Activated CD8-positive, alpha-beta memory T cell treated with anti-CD3 and anti-CD28 coated beads, Interleukin-2, amount 10 ng/mL, durations not matched to agents 7 days and 5 days (primary cell): ENCODE measurements at regions of chr18 and their contacts with region 1.

Region 1: DNA sequence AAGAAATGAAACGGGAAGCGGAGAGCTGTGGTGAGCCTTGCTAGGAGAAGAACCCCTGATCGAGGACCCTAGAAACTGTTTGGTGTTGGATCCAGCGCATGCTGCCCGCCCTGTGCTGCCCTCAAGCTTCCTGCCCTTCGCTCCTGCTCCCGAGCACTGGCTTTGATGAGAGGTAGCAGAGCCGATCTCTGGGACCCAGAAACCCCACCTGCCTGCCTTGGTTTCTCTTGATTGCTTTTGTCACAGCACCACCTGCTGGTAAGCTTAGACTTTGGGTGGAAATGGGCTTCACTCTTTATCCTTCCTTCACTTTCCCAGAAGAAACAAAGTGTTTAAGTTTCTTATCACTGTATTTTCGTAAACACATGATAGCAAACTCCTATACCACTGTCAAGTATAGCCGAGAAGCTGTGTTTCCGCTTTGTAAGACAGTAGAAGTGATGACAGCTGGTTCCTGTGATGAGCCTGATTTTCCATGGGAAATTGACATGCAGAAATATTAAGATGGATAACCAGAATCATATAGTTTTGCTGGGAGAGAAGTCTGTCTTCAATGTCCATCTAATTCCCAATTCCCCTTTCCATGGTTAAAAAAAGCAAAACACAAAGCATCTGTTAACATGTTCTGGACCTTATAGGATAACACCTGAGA is 267.4 kb downstream of the PHLPP1 start:
- DNase-seq: peak; percentile 69
- ATAC-seq: peak; percentile 75
- H3K4me3 Mint-ChIP-seq: peak overlapping the region; percentile 33
- H3K27ac Mint-ChIP-seq: no peak overlapping the region
- H3K4me1 Mint-ChIP-seq: peaks cover 6% of the 10 kb centered on the region
- H3K27me3 Mint-ChIP-seq: no peaks in the 10 kb centered on the region

Region 2: GRCh38 chr18:62584241-62585120 is 398.2 kb before region 1 on chr18:
- CTCF ChIA-PET with region 1: interaction called, 18 read pairs
- DNase-seq: peak; percentile 92
- ATAC-seq: peak; percentile 83
- H3K4me3 Mint-ChIP-seq: peak overlapping the region; percentile 9
- H3K27ac Mint-ChIP-seq: peak overlapping the region; percentile 96
- H3K4me1 Mint-ChIP-seq: peaks cover 56% of the 10 kb centered on the region
- H3K27me3 Mint-ChIP-seq: no peaks in the 10 kb centered on the region

Region 3: GRCh38 chr18:62637807-62638687 is 344.7 kb before region 1 on chr18:
- CTCF ChIA-PET with region 1: interaction called, 27 read pairs
- DNase-seq: peak; percentile 82
- ATAC-seq: peak; percentile 87
- H3K4me3 Mint-ChIP-seq: peak overlapping the region; percentile 56
- H3K27ac Mint-ChIP-seq: peak overlapping the region; percentile 81
- H3K4me1 Mint-ChIP-seq: peaks cover 22% of the 10 kb centered on the region
- H3K27me3 Mint-ChIP-seq: peaks cover 13% of the 10 kb centered on the region

Region 4: GRCh38 chr18:62714671-62715435 is 267.9 kb before region 1 on chr18:
- CTCF ChIA-PET with region 1: interaction called, 58 read pairs
- DNase-seq: peak; percentile 95
- ATAC-seq: peak; percentile 74
- H3K4me3 Mint-ChIP-seq: peak overlapping the region; percentile 84
- H3K27ac Mint-ChIP-seq: peak overlapping the region; percentile 77
- H3K4me1 Mint-ChIP-seq: peaks cover 34% of the 10 kb centered on the region
- H3K27me3 Mint-ChIP-seq: peaks cover 4% of the 10 kb centered on the region

Region 5: DNA sequence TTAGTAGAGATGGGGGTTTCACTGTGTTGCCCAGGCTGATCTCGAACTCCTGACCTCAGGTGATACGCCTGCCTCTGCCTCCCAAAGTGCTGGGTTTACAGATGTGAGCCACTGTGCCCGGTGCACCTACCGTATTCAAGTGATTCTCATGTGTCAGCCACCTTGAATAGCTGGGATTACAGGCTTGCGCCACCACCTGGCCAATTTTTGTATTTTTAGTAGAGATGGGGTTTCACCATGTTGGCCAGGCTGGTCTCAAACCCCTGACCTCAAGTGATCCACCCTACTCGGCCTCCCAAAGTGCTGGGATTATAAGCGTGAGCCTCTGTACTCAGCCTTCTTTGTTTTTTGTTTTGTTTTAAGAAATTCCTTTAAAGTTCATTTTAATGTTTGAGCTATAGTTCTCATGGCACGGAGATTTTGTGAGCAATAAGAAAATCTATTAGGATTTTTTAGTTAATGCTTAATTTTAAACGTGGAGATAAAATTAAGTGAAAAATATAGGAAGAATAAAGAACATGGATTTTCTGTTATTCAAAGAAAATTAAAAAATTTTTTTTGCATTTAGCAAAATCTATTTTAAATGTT is 24.7 kb before region 1 on chr18:
- CTCF ChIA-PET with region 1: interaction called, 14 read pairs
- DNase-seq: peak; percentile 66
- ATAC-seq: peak; percentile 73
- H3K4me3 Mint-ChIP-seq: no peak overlapping the region
- H3K27ac Mint-ChIP-seq: no peak overlapping the region
- H3K4me1 Mint-ChIP-seq: peaks cover 15% of the 10 kb centered on the region
- H3K27me3 Mint-ChIP-seq: no peaks in the 10 kb centered on the region